Lower lobe of right lung (tissue), 2 donors: ENCODE measurements at regions of chr9 and their contacts with region 1.

Region 1: GRCh38 chr9:38160613-38161215 is 91.7 kb upstream of the SHB start:
- DNase-seq: peak; percentile 57
- ATAC-seq: peak; percentile 64 to 72
- H3K4me3 ChIP-seq: no peak overlapping the region
- H3K27ac ChIP-seq: no peak overlapping the region
- H3K4me1 ChIP-seq: no peaks in the 10 kb centered on the region
- H3K27me3 ChIP-seq: no peaks in the 10 kb centered on the region
- CTCF ChIP-seq: peak; percentile 83

Region 2: DNA sequence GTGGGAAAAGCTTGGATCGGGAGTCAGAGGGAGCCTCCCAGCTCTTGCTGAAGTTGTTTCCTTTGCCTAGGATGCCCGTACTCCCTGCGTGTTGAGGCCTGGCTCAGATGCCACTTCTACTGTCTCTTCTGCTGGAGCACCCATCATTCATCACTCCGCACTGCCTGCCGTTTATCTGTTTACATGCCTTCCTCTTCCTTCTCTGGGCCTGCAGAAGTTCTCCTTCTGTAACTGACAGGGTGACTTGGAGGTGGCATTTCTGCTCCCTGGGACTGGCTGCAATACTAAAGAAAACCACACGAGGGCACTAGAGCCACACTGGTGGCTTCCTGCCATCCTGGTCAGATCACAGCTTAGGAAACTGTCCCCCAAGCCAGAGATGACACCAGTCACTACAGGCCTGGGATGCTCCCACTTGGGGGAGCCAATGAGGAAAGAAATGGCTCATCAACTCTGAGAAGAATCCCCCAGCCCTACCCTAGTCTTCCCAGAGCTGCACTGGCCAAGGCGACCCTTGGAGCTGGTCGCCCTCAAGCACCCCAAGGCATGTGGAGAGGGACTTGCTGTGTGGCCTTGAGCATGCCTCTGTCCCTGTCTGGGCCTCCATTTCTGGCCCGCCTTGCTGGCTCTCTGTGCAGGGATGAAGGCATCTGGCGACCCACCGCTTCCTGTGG is 247.1 kb before region 1 on chr9:
- intact Hi-C with region 1: loop called (anchors 10 kb)
- DNase-seq: peak; percentile 76
- ATAC-seq: peak; percentile 77 to 86
- H3K4me3 ChIP-seq: no peak overlapping the region
- H3K27ac ChIP-seq: no peak overlapping the region
- H3K4me1 ChIP-seq: peaks cover 44% of the 10 kb centered on the region
- H3K27me3 ChIP-seq: no peaks in the 10 kb centered on the region
- CTCF ChIP-seq: peak; percentile 98

Region 3: GRCh38 chr9:38088006-38088925 is 72.4 kb before region 1 on chr9:
- intact Hi-C with region 1: loop called (anchors 10 kb)
- DNase-seq: peak; percentile 79
- ATAC-seq: peak; percentile 84 to 89
- H3K4me3 ChIP-seq: no peak overlapping the region
- H3K27ac ChIP-seq: no peak overlapping the region
- H3K4me1 ChIP-seq: no peaks in the 10 kb centered on the region
- H3K27me3 ChIP-seq: no peaks in the 10 kb centered on the region
- CTCF ChIP-seq: peak; percentile 99